ENCODE measurements at regions of chr10 and their contacts with region 1.

Region 1: GRCh38 chr10:31133628-31134302 is 102.1 kb upstream of the ZNF438 start:
- DNase-seq: peak; percentile 83
- H3K4me3 Mint-ChIP-seq: peak overlapping the region; percentile 65
- H3K27ac Mint-ChIP-seq: peak overlapping the region; percentile 62
- H3K4me1 Mint-ChIP-seq: peaks cover 42% of the 10 kb centered on the region
- H3K27me3 Mint-ChIP-seq: no peaks in the 10 kb centered on the region

Region 2: DNA sequence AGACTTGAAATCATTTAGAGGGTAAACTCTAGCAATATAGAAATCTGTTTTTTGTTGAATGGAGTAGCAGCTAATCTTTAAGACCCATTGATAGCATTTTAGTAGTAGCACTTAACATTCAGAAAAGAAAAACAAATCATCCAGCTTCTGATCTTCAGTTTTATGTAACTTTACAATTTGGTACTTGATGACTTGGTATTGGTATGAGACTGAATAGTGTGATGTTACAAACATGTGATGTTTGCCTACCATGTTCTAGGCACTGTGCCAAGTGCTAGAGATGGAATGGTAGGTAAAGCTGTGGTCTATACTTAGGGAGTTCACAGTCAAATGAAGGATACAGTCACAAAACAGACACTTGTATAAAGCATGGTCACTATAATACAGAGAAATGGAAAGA is 206.6 kb after region 1 on chr10:
- CTCF ChIA-PET with region 1: no interaction called
- POLR2A ChIA-PET with region 1: no interaction called
- intact Hi-C with region 1: loop called (anchors 10 kb)
- DNase-seq: peak; percentile 38
- H3K4me3 Mint-ChIP-seq: no peak overlapping the region
- H3K27ac Mint-ChIP-seq: no peak overlapping the region
- H3K4me1 Mint-ChIP-seq: peaks cover 24% of the 10 kb centered on the region
- H3K27me3 Mint-ChIP-seq: no peaks in the 10 kb centered on the region

Region 3: GRCh38 chr10:31437959-31438358 is 304.2 kb after region 1 on chr10:
- CTCF ChIA-PET with region 1: no interaction called
- POLR2A ChIA-PET with region 1: no interaction called
- intact Hi-C with region 1: no loop called
- DNase-seq: no peak
- H3K4me3 Mint-ChIP-seq: no peak overlapping the region
- H3K27ac Mint-ChIP-seq: no peak overlapping the region
- H3K4me1 Mint-ChIP-seq: peaks cover 4% of the 10 kb centered on the region
- H3K27me3 Mint-ChIP-seq: no peaks in the 10 kb centered on the region

Region 4: GRCh38 chr10:31603235-31604087 is 469.7 kb after region 1 on chr10:
- CTCF ChIA-PET with region 1: no interaction called
- POLR2A ChIA-PET with region 1: no interaction called
- intact Hi-C with region 1: loop called (anchors 5 kb)
- DNase-seq: peak; percentile 93
- H3K4me3 Mint-ChIP-seq: peak overlapping the region; percentile 77
- H3K27ac Mint-ChIP-seq: no peak overlapping the region
- H3K4me1 Mint-ChIP-seq: peaks cover 25% of the 10 kb centered on the region
- H3K27me3 Mint-ChIP-seq: peaks cover 1% of the 10 kb centered on the region